Activated CD4-positive, alpha-beta T cell treated with anti-CD3 and anti-CD28 coated beads, Interleukin-2, amount 10 ng/mL, durations not matched to agents 7 days and 5 days (primary cell): ENCODE measurements at regions of chr20 and their contacts with region 1.

Region 1: GRCh38 chr20:45322952-45323383 is 14.9 kb upstream of the MATN4 start:
- DNase-seq: no peak
- H3K4me3 Mint-ChIP-seq: no peak overlapping the region
- H3K27ac Mint-ChIP-seq: no peak overlapping the region
- H3K4me1 Mint-ChIP-seq: peaks cover 32% of the 10 kb centered on the region
- H3K27me3 Mint-ChIP-seq: no peaks in the 10 kb centered on the region

Region 2: DNA sequence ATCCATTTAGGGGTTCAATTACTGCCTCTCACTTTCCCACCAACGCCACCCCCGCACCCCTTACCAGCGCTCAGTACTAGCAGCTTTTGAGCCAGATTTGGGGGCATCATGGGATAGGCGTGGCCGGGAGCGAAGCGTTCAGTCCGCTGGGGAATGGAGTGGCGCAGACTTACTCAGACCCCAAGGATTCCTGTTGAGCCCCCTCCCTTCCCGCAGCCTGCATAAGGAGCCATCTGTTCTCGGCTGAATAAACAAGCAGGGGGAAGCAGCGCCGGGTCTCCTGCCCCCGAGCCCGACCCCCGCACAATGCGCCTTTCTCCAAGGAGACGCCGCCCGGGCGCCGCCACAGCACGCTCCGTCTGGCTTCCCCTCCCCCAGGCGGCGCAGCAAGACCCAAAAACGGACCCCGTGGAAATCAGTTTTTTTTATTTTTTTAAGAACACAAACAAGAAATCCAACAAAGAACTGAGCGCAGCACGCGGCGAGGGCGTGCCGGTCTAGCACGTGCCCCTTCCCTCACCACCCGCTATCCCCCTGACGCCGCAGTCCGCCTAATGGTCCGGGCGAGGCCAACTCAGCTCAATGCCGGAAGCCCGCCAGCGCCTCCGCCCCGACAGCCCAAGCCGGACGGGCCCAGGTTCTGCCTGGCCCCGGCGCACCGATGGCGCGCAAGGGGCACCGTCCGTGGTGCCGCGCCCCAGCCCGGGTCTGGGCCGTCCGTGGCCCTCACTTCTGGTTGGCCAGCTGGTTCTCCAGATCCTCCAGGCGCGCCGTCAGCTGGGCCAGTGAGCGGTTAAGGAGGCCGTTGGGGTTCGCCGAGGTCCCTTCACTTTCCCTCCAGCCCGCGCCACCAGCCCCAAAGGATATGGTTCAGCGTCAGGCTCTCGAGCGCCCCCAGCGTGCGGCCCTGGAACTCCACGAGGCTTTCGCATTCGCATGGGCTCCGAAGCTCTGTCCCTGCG is 29.6 kb before region 1 on chr20:
- CTCF ChIA-PET with region 1: interaction called, 20 read pairs
- POLR2A ChIA-PET with region 1: no interaction called
- DNase-seq: peak; percentile 81
- H3K4me3 Mint-ChIP-seq: peak overlapping the region; percentile 62
- H3K27ac Mint-ChIP-seq: no peak overlapping the region
- H3K4me1 Mint-ChIP-seq: peaks cover 13% of the 10 kb centered on the region
- H3K27me3 Mint-ChIP-seq: peaks cover 36% of the 10 kb centered on the region

Region 3: GRCh38 chr20:45300961-45301360 is 22.0 kb before region 1 on chr20:
- CTCF ChIA-PET with region 1: interaction called, 15 read pairs
- POLR2A ChIA-PET with region 1: no interaction called
- DNase-seq: peak; percentile 40
- H3K4me3 Mint-ChIP-seq: no peak overlapping the region
- H3K27ac Mint-ChIP-seq: no peak overlapping the region
- H3K4me1 Mint-ChIP-seq: peaks cover 20% of the 10 kb centered on the region
- H3K27me3 Mint-ChIP-seq: peaks cover 16% of the 10 kb centered on the region

Region 4: GRCh38 chr20:45311589-45312211 is 11.3 kb before region 1 on chr20:
- CTCF ChIA-PET with region 1: interaction called, 10 read pairs
- POLR2A ChIA-PET with region 1: no interaction called
- DNase-seq: peak; percentile 64
- H3K4me3 Mint-ChIP-seq: no peak overlapping the region
- H3K27ac Mint-ChIP-seq: no peak overlapping the region
- H3K4me1 Mint-ChIP-seq: peaks cover 14% of the 10 kb centered on the region
- H3K27me3 Mint-ChIP-seq: peaks cover 47% of the 10 kb centered on the region

Region 5: GRCh38 chr20:45387274-45387673 is 64.3 kb after region 1 on chr20:
- CTCF ChIA-PET with region 1: no interaction called
- POLR2A ChIA-PET with region 1: no interaction called
- DNase-seq: no peak
- H3K4me3 Mint-ChIP-seq: no peak overlapping the region
- H3K27ac Mint-ChIP-seq: no peak overlapping the region
- H3K4me1 Mint-ChIP-seq: no peaks in the 10 kb centered on the region
- H3K27me3 Mint-ChIP-seq: no peaks in the 10 kb centered on the region